GM18951 (cell line): ENCODE measurements at regions of chr10 and their contacts with region 1.

Region 1: DNA sequence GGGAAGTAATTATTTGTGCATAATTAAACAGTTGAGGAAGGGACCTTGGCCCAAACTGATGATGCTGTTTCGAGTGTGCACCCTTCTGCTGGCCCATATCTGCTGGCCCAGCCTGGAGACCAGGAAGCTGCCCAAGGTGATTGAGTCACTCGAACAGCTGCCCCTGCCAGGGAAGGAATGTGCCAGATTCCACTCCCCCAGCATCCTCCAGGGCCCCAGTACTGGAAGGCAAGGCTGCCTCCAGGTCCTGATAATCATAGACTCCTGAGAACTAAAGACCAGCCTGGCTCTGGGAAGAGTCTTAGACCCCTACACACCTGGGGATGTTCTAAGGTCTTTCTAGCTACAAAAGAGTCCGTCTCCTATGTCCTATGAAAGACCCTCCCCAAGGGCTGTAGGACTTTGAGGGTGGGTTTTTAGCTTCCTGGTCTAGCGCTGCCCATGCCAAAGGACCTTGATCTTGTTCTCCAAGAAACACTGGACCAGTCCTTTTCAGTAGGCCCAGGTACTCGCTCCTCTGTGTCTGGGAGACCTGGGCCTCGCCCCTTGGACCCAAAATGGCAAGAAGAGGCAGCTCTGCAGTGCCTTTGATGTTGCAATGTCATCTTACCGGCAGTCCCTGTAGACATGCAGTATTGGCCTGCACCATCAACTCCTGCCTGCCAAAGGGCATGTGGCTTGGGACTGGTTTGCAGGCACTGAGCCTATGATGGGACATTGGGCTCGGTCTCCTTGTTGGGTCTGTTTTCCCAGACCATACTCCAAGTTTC is 103.2 kb upstream of the GPR26 start:
- POLR2A ChIP-seq: no peak

Region 2: DNA sequence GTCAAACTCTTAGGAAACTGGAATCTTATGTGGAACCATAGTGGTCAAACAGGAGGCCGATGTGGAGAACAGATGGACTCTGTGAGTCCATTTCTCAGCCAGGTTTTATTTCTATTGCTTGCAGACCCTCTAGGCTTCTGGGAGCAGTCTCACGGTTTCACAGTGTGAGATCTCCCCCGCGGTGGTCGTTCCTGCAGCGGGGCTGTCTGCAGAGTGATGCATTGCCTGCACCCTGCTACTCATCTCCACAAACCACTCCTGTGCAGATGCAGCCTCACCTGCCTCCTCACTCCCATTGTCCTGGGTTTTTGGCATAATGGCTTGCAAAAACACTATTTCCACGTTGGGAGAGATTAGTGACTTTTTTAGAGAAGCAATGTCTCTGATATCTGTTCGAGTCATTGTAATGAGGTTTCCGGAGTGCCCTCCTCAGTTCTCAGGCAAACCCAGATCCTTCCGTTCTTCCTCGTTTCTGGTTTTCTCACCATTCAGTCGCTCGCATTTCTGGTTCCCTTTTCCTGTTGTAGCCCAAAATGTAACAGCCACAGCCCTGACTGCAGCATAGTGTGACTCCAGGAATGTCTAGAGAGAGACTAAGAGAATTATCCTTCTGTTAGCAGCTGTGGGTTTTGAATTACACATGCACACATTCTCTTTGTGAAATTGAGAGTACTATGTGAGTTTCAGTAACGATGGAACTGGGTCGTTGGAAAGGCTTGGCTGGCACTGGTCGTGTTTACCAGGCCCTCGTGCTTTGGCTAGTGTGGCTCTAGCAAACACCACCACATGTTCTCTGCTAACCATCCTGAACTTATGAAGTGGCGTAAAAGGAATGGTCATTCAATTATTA is 524.0 kb before region 1 on chr10:
- in situ Hi-C with region 1: loop called (anchors 10 kb)
- POLR2A ChIP-seq: no peak

Region 3: GRCh38 chr10:123129618-123130271 is 433.3 kb before region 1 on chr10:
- in situ Hi-C with region 1: loop called (anchors 5 kb)
- POLR2A ChIP-seq: no peak